Natural killer cell (primary cell): ENCODE measurements at regions of chr2 and their contacts with region 1.

Region 1: DNA sequence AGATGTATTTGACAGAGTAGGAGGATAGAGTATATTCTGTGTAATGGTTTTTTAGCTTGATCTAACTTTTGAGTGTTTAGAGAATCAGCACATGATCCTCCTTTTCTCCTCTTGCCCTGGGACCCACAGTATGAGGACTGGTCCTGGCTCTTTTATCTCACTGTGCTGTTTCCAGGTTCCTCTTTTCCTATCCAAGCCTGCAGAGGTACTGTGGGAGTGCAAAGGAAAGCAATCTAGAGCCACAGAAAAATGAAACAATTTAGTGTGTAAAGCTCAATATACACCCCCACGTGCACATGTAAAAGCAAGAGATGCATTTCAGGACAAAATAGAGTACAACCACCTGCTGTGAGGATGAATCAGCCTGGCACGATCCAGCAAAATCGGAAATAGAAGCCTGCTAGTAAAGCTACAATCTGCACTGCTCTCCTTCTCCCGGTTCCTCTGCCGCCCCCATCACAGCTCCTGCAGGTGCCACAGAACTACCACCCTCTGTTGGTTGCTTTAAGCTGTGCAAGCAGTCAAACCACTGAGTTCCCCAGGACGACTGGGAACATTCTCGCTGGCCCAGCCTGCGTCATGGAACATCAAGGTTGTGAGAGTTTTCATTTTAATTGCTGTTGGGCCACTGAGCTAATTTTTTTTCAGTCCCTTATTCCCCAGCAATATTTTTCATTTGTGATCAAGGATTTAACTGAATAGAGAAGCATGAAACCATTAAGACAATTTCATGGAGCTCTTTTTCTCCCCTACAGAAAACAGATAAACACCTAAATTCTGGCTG is 47.8 kb upstream of the MAPRE3 start:
- DNase-seq: peak in 1 of 2 donors; percentile 63
- ATAC-seq: peak in 2 of 3 donors; percentile 66 to 77
- H3K4me3 ChIP-seq: no peak overlapping the region
- H3K4me3 Mint-ChIP-seq: no peak overlapping the region
- H3K27ac ChIP-seq: no peak overlapping the region
- H3K27ac Mint-ChIP-seq: no peak overlapping the region
- H3K4me1 ChIP-seq: no peaks in the 10 kb centered on the region
- H3K4me1 Mint-ChIP-seq: peaks cover 0 to 8% of the 10 kb centered on the region in 2 donors
- H3K27me3 ChIP-seq: no peaks in the 10 kb centered on the region
- H3K27me3 Mint-ChIP-seq: peaks cover 14 to 20% of the 10 kb centered on the region in 2 donors
- CTCF ChIP-seq: peak; percentile 24

Region 2: DNA sequence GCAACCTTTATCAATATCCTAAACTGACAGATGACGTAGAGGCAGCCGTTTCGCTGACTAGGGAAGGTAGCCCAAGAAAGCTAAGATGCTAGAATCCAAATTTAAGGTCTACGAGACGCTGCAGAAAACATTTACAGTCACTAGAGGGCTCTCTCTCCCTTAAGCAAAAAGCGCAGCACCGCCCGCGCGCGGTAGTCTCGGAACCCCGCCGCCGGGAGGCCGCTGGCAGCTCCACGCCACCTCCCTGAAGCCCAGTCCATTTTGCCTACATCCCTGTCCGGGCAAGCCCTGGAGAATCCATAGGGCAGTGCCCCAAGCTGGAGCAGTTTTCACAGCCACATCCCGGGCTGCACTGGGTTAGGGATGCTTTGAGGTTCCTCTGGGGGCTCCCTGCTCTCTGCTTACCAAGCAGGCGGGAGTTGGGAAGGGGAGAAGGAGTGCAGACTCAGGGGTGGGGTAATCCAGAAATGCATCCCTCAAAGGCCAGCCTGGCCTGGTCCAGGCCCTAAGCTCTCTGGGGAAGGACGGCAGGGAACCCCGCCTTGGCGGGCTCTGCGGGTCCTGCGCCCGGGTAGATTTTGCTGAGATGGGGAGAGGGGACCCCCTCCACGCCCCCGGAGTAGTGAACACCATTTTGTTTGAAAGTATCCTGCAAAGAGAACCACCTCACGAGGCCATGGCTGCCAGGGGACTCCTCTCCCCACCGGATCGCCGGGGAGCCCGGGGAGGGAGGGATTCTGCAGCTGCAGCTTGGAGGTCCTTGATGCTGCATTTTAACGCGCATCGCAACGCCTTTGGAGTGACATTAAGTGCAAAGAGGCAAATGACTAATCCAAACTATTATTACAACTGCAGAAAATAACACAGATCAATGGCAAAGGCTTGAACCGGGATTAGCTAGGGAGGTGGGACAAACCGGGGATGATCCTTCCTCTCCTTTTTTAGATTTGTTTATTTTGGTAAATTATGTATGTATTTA is 76.0 kb before region 1 on chr2:
- intact Hi-C with region 1: loop called (anchors 10 kb)
- DNase-seq: peak; percentile 32 to 79
- ATAC-seq: peak; percentile 74 to 86 (median 78)
- H3K4me3 ChIP-seq: no peak overlapping the region
- H3K4me3 Mint-ChIP-seq: peak overlapping the region; percentile 65
- H3K27ac ChIP-seq: no peak overlapping the region
- H3K27ac Mint-ChIP-seq: no peak overlapping the region
- H3K4me1 ChIP-seq: peaks cover 28% of the 10 kb centered on the region
- H3K4me1 Mint-ChIP-seq: peaks cover 0 to 13% of the 10 kb centered on the region in 2 donors
- H3K27me3 ChIP-seq: peaks cover 46% of the 10 kb centered on the region
- H3K27me3 Mint-ChIP-seq: peaks cover 28 to 31% of the 10 kb centered on the region in 2 donors
- CTCF ChIP-seq: peak; percentile 67

Region 3: DNA sequence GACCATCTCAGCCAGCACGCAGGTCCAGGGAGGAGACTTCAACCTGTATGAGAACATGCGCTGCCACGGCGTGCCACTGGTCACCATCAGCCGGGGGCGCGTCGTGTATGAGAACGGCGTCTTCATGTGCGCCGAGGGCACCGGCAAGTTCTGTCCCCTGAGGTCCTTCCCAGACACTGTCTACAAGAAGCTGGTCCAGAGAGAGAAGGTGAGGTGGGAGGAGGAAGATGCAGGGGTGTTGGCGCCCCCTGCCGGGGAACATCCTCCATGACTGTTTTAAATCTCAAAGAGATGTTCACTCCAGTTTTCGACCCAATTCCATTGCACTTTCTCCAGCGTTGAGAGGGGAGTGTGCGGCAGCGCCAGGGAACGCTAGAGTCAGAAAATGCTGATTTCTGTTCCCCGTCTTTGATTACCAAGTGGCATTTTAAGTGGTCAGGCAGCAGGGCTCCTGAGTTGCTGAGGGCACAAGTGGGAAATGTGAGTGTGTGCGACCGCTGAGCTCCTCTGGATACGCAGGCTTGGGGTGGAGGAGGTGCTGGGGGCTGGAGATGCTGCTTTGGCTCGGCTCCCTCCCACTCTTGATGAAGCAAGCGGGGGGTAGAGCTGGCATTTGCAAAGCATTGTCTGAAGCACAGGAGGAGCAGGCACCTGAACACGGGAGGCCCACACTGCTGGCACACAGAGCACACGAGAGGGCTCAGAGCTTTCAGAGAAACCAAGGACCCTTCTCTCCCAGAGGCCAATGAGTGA is 20.1 kb after region 1 on chr2:
- intact Hi-C with region 1: no loop called
- DNase-seq: peak; percentile 46 to 77
- ATAC-seq: peak in 2 of 3 donors; percentile 36 to 64
- H3K4me3 ChIP-seq: no peak overlapping the region
- H3K4me3 Mint-ChIP-seq: no peak overlapping the region
- H3K27ac ChIP-seq: no peak overlapping the region
- H3K27ac Mint-ChIP-seq: no peak overlapping the region
- H3K4me1 ChIP-seq: no peaks in the 10 kb centered on the region
- H3K4me1 Mint-ChIP-seq: peaks cover 0 to 7% of the 10 kb centered on the region in 2 donors
- H3K27me3 ChIP-seq: no peaks in the 10 kb centered on the region
- H3K27me3 Mint-ChIP-seq: peaks cover 10 to 14% of the 10 kb centered on the region in 2 donors
- CTCF ChIP-seq: peak; percentile 73